ENCODE measurements at regions of chr2 and their contacts with region 1.

Region 1: DNA sequence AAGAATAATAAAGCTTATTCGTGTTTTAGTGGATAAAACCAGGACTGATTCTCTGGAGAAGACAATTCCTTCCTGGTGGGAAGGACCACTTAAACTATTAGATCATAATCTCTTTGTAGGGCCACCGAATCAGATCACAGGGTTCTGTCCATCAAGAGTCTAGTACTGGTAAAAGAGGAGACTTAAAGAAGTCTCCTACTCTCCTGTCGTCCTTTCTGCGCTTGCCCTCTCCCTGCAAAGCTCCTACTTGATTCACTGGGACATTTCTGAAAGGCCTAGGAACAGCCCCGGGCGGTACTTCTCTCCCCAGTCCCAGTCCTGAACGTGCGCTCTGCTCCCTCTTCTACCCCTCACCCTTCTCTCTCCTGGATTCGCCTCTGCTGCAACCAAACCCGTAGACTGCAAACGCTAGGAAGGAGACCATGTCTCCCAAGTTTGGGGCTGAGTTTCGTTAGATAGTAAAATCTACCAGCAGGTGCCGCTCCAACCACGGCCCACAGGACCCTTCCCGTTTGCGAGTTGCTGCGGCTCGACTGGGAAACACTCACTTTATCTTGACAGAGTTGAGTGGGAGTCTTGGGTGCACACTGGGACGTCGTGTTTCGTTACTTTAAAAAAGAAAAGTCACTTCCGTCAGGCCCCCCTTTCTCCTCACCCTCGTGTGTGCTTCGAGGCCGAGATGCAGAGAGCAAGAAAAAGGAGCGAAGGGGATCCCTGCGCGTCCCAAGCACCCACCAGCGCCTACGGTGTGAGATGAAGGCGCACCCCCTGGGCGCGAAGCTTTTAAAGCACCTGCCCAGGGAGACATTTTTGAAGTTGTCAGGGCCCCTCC is 923 bp downstream of the FIGLA start:
- DNase-seq: peak; percentile 64 to 86
- H3K4me3 ChIP-seq: 0 out of 2 replicates have a peak overlapping the region, but pooled peaks have one; percentile 6
- H3K4me1 ChIP-seq: peaks cover 4% of the 10 kb centered on the region
- H3K27me3 ChIP-seq: no peaks in the 10 kb centered on the region

Region 2: DNA sequence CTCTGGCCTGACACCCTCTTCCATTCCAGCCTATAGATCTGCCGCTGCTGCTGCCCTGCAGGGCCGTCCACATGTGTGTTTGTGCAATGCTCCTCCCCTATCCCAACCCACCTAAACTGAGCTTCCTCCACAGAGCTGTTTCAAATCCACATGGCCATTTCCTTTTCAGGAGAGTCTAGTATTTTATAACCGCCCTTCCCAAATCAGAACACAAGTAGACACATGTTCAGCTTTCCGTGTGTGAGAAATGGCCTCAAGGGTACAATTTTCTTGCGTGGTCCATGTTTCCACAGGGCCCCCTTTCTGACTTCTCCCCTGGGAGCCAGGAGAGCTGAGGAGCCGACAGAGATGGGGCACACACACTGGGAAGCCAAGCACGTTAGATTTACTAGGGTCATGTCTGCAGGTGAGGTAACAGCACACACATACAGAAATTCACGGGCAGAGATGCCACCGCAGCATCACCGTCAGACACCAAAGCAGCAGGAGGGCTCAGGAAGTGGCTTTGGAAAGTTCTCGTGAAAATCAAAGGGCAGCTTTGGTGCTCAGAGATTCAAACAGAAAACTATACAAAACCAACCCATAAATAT is 133.0 kb before region 1 on chr2:
- in situ Hi-C with region 1: loop called (anchors 10 kb)
- DNase-seq: no peak
- H3K4me3 ChIP-seq: no peak overlapping the region
- H3K4me1 ChIP-seq: 0 out of 2 replicates have a peak, but pooled peaks cover 2% of the 10 kb centered on the region
- H3K27me3 ChIP-seq: no peaks in the 10 kb centered on the region